ENCODE measurements at regions of chr5 and their contacts with region 1.

Region 1: DNA sequence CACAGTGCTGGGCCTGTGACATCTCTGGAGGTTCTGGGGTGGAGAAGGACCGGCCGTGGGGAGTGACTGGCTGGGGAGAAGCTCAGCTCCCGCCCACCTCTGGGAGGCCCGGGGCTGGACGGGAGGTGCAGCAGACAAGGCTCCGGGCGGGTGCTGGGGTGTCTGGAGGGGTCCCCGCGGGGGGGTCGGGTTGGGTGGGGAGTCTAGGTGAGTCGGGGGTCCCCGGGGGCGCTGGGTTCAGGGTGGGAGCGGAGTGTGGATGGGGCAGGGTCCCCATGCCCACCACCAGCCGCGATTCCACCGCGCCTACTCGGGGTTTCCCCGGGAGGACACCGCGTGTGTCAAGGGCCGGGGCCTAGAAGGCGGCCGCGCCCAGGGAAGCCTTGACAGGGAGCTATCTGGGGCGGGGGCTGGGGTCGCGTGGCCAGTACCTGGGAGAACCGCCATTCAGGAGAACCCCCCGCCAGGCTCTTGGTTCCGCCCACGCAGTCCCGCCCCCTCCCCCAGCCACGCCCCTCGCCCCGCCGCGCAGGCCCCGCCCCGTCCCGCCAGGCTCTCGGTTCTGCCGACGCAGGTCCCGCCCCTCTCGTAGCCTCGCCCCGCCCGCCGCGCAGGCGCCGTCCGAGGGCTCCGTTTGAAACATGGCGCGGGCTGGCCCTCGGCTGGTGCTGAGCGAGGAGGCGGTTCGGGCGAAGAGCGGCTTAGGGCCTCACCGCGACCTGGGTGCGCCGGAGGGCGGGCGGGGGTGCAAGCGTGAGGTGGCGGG is at the start of gene CEP72:
- DNase-seq: peak; percentile 88
- ATAC-seq: peak; percentile 88
- H3K4me3 ChIP-seq: peak within 1 kb of the TSS; percentile 74
- H3K27ac ChIP-seq: no peak within 1 kb of the TSS
- H3K4me1 ChIP-seq: peaks cover 22% of the 10 kb centered on the region
- H3K27me3 ChIP-seq: no peaks in the 10 kb centered on the region
- CTCF ChIP-seq: no peak
- total RNA-seq, gene CEP72: 17.3 and 23.6 TPM in 2 replicates

Region 2: GRCh38 chr5:370959-371810 is 240.7 kb before region 1 on chr5:
- CTCF ChIA-PET with region 1: no interaction called
- POLR2A ChIA-PET with region 1: interaction called, 15 read pairs
- intact Hi-C with region 1: no loop called
- DNase-seq: no peak
- ATAC-seq: no peak
- H3K4me3 ChIP-seq: no peak overlapping the region
- H3K27ac ChIP-seq: no peak overlapping the region
- H3K4me1 ChIP-seq: no peaks in the 10 kb centered on the region
- H3K27me3 ChIP-seq: no peaks in the 10 kb centered on the region
- CTCF ChIP-seq: no peak

Region 3: GRCh38 chr5:442335-443238 is 169.3 kb before region 1 on chr5 and contains the start of gene EXOC3:
- CTCF ChIA-PET with region 1: no interaction called
- POLR2A ChIA-PET with region 1: no interaction called
- intact Hi-C with region 1: loop called (anchors 10 kb)
- DNase-seq: peak; percentile 76
- ATAC-seq: peak; percentile 88
- H3K4me3 ChIP-seq: peak within 1 kb of the TSS; percentile 94
- H3K27ac ChIP-seq: peak within 1 kb of the TSS; percentile 45
- H3K4me1 ChIP-seq: peaks cover 18% of the 10 kb centered on the region
- H3K27me3 ChIP-seq: no peaks in the 10 kb centered on the region
- CTCF ChIP-seq: no peak
- total RNA-seq, gene EXOC3: 31.3 and 42.1 TPM in 2 replicates

Region 4: GRCh38 chr5:472656-473553 is 139.0 kb before region 1 on chr5:
- CTCF ChIA-PET with region 1: no interaction called
- POLR2A ChIA-PET with region 1: interaction called, 9 read pairs
- intact Hi-C with region 1: loop called (anchors 10 kb)
- DNase-seq: peak; percentile 80
- ATAC-seq: peak; percentile 64
- H3K4me3 ChIP-seq: peak overlapping the region; percentile 92
- H3K27ac ChIP-seq: peak overlapping the region; percentile 48
- H3K4me1 ChIP-seq: peaks cover 32% of the 10 kb centered on the region
- H3K27me3 ChIP-seq: no peaks in the 10 kb centered on the region
- CTCF ChIP-seq: no peak

Region 5: GRCh38 chr5:528625-529511 is 83.0 kb before region 1 on chr5:
- CTCF ChIA-PET with region 1: no interaction called
- POLR2A ChIA-PET with region 1: no interaction called
- intact Hi-C with region 1: no loop called
- DNase-seq: no peak
- ATAC-seq: no peak
- H3K4me3 ChIP-seq: no peak overlapping the region
- H3K27ac ChIP-seq: no peak overlapping the region
- H3K4me1 ChIP-seq: no peaks in the 10 kb centered on the region
- H3K27me3 ChIP-seq: peaks cover 50% of the 10 kb centered on the region
- CTCF ChIP-seq: no peak

Region 6: GRCh38 chr5:565782-566440 is 46.0 kb before region 1 on chr5:
- CTCF ChIA-PET with region 1: no interaction called
- POLR2A ChIA-PET with region 1: no interaction called
- intact Hi-C with region 1: loop called (anchors 5 kb)
- DNase-seq: peak; percentile 73
- ATAC-seq: peak; percentile 87
- H3K4me3 ChIP-seq: peak overlapping the region; percentile 47; the same call in 1 of the 2 replicates
- H3K27ac ChIP-seq: peak overlapping the region; percentile 54
- H3K4me1 ChIP-seq: peaks cover 12% of the 10 kb centered on the region; the same call in 1 of the 2 replicates
- H3K27me3 ChIP-seq: no peaks in the 10 kb centered on the region
- CTCF ChIP-seq: peak; percentile 26; the same call in 1 of the 2 replicates

Region 7: DNA sequence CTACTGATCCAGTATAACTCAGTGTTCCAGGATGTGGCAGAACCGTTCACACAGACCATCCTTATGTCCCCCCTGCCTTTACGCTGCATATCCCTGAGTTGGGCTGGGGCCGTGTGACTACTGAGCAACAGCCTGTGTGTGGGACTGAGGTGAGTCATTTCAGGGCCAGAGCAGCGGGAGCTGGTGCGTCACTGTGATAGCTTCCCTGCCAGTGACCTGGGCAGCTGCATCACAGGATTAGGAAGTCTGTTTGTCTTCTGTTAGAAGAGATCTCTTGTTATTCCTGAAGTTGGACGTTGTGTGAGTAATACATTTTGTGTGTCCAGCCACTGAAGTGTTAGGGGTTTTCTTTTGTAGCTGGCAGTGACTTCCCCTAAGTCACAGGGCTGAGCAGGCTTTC is 45.7 kb after region 1 on chr5:
- CTCF ChIA-PET with region 1: no interaction called
- POLR2A ChIA-PET with region 1: no interaction called
- intact Hi-C with region 1: loop called (anchors 5 kb)
- DNase-seq: peak; percentile 89
- ATAC-seq: peak; percentile 100
- H3K4me3 ChIP-seq: no peak overlapping the region
- H3K27ac ChIP-seq: peak overlapping the region; percentile 97
- H3K4me1 ChIP-seq: peaks cover 14% of the 10 kb centered on the region
- H3K27me3 ChIP-seq: no peaks in the 10 kb centered on the region
- CTCF ChIP-seq: no peak

Region 8: GRCh38 chr5:1555011-1555807 is 943.3 kb after region 1 on chr5:
- CTCF ChIA-PET with region 1: no interaction called
- POLR2A ChIA-PET with region 1: interaction called, 18 read pairs
- intact Hi-C with region 1: no loop called
- DNase-seq: peak; percentile 99
- ATAC-seq: peak; percentile 93
- H3K4me3 ChIP-seq: peak overlapping the region; percentile 12; the same call in 1 of the 2 replicates
- H3K27ac ChIP-seq: peak overlapping the region; percentile 78
- H3K4me1 ChIP-seq: peaks cover 38% of the 10 kb centered on the region
- H3K27me3 ChIP-seq: no peaks in the 10 kb centered on the region
- CTCF ChIP-seq: no peak

Measured in PC-3 (cell line).